IMR-90 (cell line): ENCODE measurements at regions of chr4 and their contacts with region 1.

Region 1: DNA sequence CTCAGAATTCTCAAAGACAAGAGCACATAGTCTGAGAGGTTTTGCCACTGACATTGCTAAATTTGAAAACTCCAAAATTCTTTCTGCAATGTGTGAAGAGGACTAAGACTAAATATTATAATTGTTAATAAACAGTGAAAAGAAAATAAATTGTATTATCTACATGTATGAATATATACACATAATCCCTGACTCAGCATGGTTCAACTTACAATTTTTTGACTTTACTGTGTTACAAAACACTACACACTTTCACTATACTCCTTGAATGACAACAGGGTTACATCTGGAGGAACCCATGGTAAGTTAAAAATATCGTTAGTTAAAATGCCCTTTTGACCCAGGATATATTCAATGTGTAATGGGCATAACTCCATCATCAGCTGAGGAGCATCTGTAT is 2017.2 kb upstream of the TENM3 start:
- DNase-seq: no peak
- ATAC-seq: no peak
- H3K4me3 ChIP-seq: no peak overlapping the region
- H3K27ac ChIP-seq: no peak overlapping the region
- H3K4me1 ChIP-seq: no peaks in the 10 kb centered on the region
- H3K27me3 ChIP-seq: no peaks in the 10 kb centered on the region
- CTCF ChIP-seq: no peak
- POLR2A ChIP-seq: no peak
- RAD21 ChIP-seq: no peak

Region 2: DNA sequence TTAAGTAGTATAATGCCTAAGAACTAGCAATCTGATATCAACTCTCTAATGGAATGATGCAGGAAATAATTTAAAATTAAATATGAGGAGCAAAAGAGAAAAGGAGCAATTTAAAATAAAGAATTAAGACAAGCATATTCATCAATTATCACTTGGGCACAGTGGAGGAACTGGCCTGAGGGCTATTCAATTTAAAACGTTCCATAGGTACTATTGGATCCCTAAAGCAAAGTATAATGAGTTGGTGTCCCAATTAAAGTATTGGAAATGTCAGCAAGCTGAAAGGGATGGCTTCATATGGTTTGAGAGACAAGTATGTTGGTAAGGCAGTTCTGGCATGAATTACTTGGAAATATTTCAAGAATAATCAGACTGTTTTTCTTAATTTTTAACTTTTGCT is 46.8 kb before region 1 on chr4:
- CTCF ChIA-PET with region 1: no interaction called
- POLR2A ChIA-PET with region 1: no interaction called
- dilution Hi-C with region 1: no loop called
- in situ Hi-C with region 1: no loop called
- intact Hi-C with region 1: loop called (anchors 1 kb)
- DNase-seq: no peak
- ATAC-seq: no peak
- H3K4me3 ChIP-seq: no peak overlapping the region
- H3K27ac ChIP-seq: no peak overlapping the region
- H3K4me1 ChIP-seq: no peaks in the 10 kb centered on the region
- H3K27me3 ChIP-seq: no peaks in the 10 kb centered on the region
- CTCF ChIP-seq: no peak
- POLR2A ChIP-seq: no peak
- RAD21 ChIP-seq: no peak